Vagina (tissue), 2 donors: ENCODE measurements at regions of chr1 and their contacts with region 1.

Region 1: GRCh38 chr1:43530483-43531106 is at the start of gene PTPRF:
- DNase-seq: no peak
- H3K4me3 ChIP-seq: peak within 1 kb of the TSS; percentile 82 to 92
- H3K27ac ChIP-seq: peak within 1 kb of the TSS; percentile 94
- H3K4me1 ChIP-seq: peaks cover 47% of the 10 kb centered on the region
- H3K27me3 ChIP-seq: no peaks in the 10 kb centered on the region
- CTCF ChIP-seq: no peak
- POLR2A ChIP-seq: peak in 1 of 2 donors; percentile 47
- total RNA-seq, gene PTPRF: 139 TPM

Region 2: DNA sequence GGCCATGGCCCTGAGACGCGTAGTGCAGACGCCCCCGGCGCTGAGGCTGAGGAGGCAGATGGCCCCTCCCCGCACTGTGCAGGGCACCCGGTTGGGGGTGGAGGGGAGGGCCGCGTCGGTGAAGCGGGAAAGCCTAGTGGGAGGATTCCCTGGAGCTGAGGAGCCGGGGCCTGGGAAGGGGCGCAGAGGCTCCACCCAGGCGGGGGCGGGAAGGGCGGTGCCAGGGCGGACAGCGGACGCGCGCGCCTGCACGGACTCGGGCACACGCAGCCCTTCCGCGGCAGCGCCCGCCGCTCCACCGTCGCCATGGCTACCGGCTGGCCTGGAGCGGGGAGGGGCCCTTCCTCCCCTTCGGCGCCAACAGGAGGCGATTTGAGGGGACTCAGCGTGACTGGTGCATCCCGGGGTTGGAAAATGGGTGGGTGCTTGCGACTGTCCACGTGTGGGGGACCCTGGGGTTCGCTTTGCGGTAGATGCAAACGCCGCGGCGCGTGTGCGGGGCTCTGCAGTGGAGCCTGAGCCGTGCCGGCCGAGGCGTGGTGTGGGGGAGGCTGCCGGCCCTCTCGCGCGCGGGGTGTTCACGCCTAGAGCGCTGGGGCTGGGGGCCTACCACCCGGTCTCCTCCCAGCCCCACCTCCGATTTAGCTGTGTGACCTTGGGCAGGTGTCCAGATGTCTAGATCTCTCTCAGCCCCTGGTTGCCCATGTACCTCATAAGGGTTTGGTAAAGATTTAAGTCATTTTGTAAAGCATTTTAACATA is 35.2 kb after region 1 on chr1:
- intact Hi-C with region 1: loop called (anchors 5 kb)
- DNase-seq: no peak
- H3K4me3 ChIP-seq: peak overlapping the region; percentile 50 to 58
- H3K27ac ChIP-seq: peak overlapping the region; percentile 82
- H3K4me1 ChIP-seq: peaks cover 47% of the 10 kb centered on the region
- H3K27me3 ChIP-seq: no peaks in the 10 kb centered on the region
- CTCF ChIP-seq: no peak
- POLR2A ChIP-seq: no peak

Region 3: DNA sequence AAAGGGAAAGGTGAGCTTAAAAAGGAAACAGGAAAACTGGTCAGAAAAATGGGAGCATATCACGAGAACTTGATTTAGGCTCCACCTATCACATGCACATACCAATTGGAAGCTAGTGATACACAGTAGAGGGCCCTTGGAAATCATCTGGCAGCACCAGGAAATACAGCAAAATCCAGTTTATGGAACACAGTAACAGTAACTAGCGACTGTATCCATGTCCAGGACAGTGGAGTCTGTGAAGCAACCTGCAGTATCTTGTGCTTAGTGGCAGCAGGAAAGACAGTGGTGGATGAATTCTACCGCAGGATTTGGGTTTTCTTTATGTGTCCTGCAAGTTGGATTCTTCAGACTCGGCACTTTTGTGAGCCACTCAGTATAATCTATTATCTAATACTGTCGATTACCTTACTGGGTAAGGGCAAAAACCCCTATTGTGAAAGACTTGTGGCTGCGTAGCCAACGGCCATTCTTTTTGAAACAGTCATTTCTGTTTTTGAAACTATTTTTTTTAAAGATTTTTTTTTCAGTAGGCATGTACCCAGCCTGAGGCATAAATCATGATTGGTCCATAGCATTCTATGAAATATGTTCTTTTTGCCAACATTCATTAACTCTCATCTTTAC is 117.7 kb after region 1 on chr1:
- intact Hi-C with region 1: loop called (anchors 10 kb)
- DNase-seq: no peak
- H3K4me3 ChIP-seq: no peak overlapping the region
- H3K27ac ChIP-seq: no peak overlapping the region
- H3K4me1 ChIP-seq: peaks cover 26% of the 10 kb centered on the region
- H3K27me3 ChIP-seq: no peaks in the 10 kb centered on the region
- CTCF ChIP-seq: no peak
- POLR2A ChIP-seq: no peak